ENCODE measurements at regions of chr1 and their contacts with region 1.

Region 1: DNA sequence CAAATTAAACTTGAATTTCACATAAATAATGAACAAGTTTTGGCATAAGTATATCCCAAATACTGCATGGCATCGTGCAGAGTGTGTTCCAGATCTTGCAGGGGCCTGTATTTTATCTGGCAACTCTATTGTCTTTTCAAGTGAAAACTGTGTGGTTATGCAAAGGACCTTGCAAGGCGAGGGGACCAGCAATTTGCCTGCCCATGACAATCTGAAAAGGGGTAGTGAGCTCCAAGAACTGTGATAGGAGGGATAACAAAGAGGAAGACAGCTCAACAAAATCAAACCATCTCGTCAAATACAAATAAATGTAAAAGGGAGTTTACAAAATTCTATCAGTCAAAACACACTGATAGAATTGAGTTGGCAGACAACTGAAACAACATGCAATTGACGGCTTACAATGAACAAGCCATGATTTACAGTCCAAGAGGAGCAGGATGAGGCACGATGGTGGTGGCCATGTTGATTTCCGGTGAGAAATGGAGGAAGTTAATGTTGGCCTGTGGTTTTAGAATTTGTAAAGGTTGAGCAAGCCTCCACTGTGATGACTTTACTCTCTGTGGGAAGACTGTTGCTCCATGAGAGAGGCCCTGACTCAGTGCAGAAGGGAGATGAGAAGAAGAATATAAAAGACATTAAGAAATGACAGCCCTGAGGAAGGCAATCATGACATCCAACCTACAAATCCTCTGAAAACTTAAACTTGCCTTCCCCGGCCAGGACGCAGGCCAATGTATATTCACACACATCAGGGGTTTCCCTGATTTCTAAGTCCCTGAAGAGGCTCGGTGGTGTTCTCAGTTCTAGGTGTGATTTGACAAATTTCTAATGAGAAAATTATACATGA is 132.2 kb downstream of the ADSS2 start:
- DNase-seq: peak; percentile 39
- H3K4me3 Mint-ChIP-seq: peak overlapping the region; percentile 46
- H3K27ac Mint-ChIP-seq: peak overlapping the region; percentile 90
- H3K4me1 Mint-ChIP-seq: peaks cover 45% of the 10 kb centered on the region
- H3K27me3 Mint-ChIP-seq: no peaks in the 10 kb centered on the region

Region 2: GRCh38 chr1:243596431-243597062 is 723.0 kb before region 1 on chr1:
- intact Hi-C with region 1: loop called (anchors 1 kb)
- DNase-seq: no peak
- H3K4me3 Mint-ChIP-seq: peak overlapping the region; percentile 57
- H3K27ac Mint-ChIP-seq: peak overlapping the region; percentile 86
- H3K4me1 Mint-ChIP-seq: peaks cover 48% of the 10 kb centered on the region
- H3K27me3 Mint-ChIP-seq: no peaks in the 10 kb centered on the region

Region 3: DNA sequence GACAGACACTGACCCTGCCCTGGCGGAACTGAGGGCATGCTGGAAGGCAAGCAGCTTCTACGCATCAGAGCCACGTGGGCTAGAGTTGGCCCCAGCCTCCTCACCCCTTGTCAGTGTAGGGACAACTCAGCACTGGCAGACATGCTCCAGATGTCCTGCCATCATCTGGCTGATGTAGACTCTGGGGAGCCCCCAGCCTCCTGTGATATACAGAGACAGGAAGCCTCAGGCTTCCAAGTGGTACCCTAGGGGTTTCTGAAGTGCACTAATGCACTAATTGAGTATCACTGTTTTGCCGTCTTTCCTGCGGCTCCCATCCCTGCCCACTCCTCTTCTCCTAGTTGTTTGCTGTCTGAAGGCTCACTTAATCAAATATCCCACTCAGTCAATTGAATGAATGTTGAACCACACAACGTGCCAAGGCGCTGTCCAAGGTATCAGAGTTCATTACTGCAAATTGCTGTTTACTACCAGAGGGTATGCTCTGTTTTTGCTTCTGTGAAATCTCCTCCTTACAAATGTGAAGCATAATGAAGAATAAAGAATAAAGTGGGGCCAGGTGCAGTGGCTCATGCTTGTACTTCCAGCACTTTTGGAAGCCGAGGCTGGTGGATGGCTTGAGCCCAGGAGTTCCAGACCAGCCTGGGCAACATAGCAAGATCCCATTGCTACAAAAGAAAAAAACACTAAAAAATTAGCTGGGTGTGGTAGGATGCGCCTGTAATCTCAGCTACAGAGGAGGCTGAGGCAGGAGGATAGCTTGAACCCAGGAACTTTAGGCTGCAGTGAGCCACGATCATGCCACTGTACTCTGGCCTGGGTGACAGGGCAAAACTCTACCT is 344.8 kb before region 1 on chr1:
- intact Hi-C with region 1: no loop called
- DNase-seq: no peak
- H3K4me3 Mint-ChIP-seq: no peak overlapping the region
- H3K27ac Mint-ChIP-seq: no peak overlapping the region
- H3K4me1 Mint-ChIP-seq: no peaks in the 10 kb centered on the region
- H3K27me3 Mint-ChIP-seq: peaks cover 2% of the 10 kb centered on the region

Region 4: GRCh38 chr1:244104309-244105060 is 215.0 kb before region 1 on chr1:
- intact Hi-C with region 1: no loop called
- DNase-seq: no peak
- H3K4me3 Mint-ChIP-seq: no peak overlapping the region
- H3K27ac Mint-ChIP-seq: no peak overlapping the region
- H3K4me1 Mint-ChIP-seq: peaks cover 1% of the 10 kb centered on the region
- H3K27me3 Mint-ChIP-seq: peaks cover 13% of the 10 kb centered on the region

Region 5: GRCh38 chr1:244296447-244296846 is 23.1 kb before region 1 on chr1:
- intact Hi-C with region 1: loop called (anchors 2 kb)
- DNase-seq: no peak
- H3K4me3 Mint-ChIP-seq: no peak overlapping the region
- H3K27ac Mint-ChIP-seq: no peak overlapping the region
- H3K4me1 Mint-ChIP-seq: peaks cover 6% of the 10 kb centered on the region
- H3K27me3 Mint-ChIP-seq: peaks cover 2% of the 10 kb centered on the region

Region 6: DNA sequence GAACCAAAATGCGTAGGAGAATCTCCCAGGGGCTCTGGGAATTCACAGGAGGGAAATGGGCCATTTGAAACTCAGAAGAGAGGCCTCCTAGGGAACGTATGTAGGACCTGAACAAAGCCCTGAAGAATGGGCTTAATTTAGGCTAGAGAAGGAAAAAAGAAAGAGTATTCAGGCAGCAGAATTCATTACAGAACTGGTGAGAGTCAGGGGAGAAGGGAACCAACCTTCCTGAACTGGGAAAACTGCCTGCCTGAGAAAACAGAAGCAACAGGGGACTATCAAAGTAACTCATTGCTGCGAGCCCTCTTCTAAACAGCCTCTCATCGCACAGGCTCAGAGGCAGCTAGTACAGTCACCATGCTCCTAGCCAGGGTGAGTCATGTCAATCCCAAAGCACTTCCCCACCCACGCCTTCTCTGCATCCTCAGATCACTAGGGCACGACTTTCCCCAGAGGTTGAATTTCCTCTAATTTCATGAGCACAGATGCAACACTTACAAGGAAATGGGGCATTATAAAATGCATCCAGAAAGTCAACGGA is 34.1 kb after region 1 on chr1:
- intact Hi-C with region 1: loop called (anchors 2 kb)
- DNase-seq: no peak
- H3K4me3 Mint-ChIP-seq: no peak overlapping the region
- H3K27ac Mint-ChIP-seq: peak overlapping the region; percentile 39
- H3K4me1 Mint-ChIP-seq: peaks cover 19% of the 10 kb centered on the region
- H3K27me3 Mint-ChIP-seq: no peaks in the 10 kb centered on the region

Region 7: GRCh38 chr1:244451951-244452795 is 132.7 kb after region 1 on chr1:
- intact Hi-C with region 1: loop called (anchors 1 kb)
- DNase-seq: peak; percentile 98
- H3K4me3 Mint-ChIP-seq: peak overlapping the region; percentile 95
- H3K27ac Mint-ChIP-seq: peak overlapping the region; percentile 96
- H3K4me1 Mint-ChIP-seq: peaks cover 34% of the 10 kb centered on the region
- H3K27me3 Mint-ChIP-seq: no peaks in the 10 kb centered on the region

Region 8: DNA sequence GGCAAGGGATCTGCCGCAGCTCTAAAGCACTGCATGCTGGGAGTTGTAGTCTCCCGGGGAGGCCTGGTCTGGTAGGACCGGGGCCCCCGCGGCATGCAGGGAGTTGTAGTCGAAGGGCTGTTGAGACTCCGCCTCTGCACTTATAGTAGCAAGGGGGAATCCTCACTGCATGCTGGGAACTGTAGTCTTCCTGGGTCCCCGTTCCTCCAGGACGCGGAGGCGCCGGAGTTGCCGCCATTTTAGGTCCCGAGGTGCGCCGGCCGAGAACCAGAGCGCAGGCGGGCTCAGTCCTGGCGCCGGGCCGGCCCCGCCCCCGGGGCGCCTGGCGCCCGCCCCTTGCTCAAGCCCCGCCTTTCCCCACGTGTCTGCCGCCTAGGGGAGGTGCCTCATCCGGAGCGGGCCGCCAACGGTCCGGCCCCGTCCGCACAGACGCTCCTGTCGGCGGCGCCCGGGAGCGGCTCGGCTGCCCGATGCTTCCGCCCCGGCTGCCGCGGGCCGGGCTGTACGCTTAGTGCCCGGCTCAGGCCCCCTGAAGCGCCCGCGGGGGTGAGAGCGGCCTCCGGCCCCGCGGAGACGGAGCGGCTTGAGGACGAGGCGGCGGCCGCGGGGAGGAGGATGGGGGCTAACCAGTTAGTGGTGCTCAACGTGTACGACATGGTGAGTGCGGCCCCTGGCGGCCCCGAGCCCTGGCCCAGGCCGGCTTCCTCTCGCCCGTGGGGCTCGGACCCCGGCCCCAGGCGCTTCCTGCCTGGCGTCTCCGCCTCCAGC is 333.4 kb after region 1 on chr1 and contains the start of gene DESI2:
- intact Hi-C with region 1: loop called (anchors 5 kb)
- DNase-seq: peak; percentile 98
- H3K4me3 Mint-ChIP-seq: peak within 1 kb of the TSS; percentile 82
- H3K27ac Mint-ChIP-seq: peak within 1 kb of the TSS; percentile 71
- H3K4me1 Mint-ChIP-seq: peaks cover 20% of the 10 kb centered on the region
- H3K27me3 Mint-ChIP-seq: peaks cover 1% of the 10 kb centered on the region
- total RNA-seq, gene DESI2: 27.4 TPM in 2 replicates

Measured in activated T-helper 2 cell treated with anti-CD3 and anti-CD28 coated beads, Interferon-gamma antibody, Interleukin-2, Interleukin-4, amounts not matched to agents 10 μg/mL and 5 μg/mL and 100 μg/mL, durations not matched to agents 14 hours and 24 hours and 36 hours (primary cell).